ENCODE measurements at regions of chr3 and their contacts with region 1.

Region 1: GRCh38 chr3:101685870-101686412 is 577 bp downstream of the RPL24 start:
- DNase-seq: no peak
- ATAC-seq: peak; percentile 20
- H3K4me3 Mint-ChIP-seq: peak overlapping the region; percentile 100
- H3K27ac Mint-ChIP-seq: peak overlapping the region; percentile 95
- H3K4me1 Mint-ChIP-seq: peaks cover 36% of the 10 kb centered on the region
- H3K27me3 Mint-ChIP-seq: no peaks in the 10 kb centered on the region

Region 2: GRCh38 chr3:101588616-101589015 is 97.3 kb before region 1 on chr3:
- CTCF ChIA-PET with region 1: no interaction called
- DNase-seq: no peak
- ATAC-seq: no peak
- H3K4me3 Mint-ChIP-seq: no peak overlapping the region
- H3K27ac Mint-ChIP-seq: no peak overlapping the region
- H3K4me1 Mint-ChIP-seq: peaks cover 11% of the 10 kb centered on the region
- H3K27me3 Mint-ChIP-seq: no peaks in the 10 kb centered on the region

Region 3: GRCh38 chr3:101724329-101725193 is 38.6 kb after region 1 on chr3 and contains the start of gene CEP97:
- CTCF ChIA-PET with region 1: interaction called, 13 read pairs
- DNase-seq: peak; percentile 94
- ATAC-seq: peak; percentile 95
- H3K4me3 Mint-ChIP-seq: peak within 1 kb of the TSS; percentile 92
- H3K27ac Mint-ChIP-seq: peak within 1 kb of the TSS; percentile 95
- H3K4me1 Mint-ChIP-seq: peaks cover 43% of the 10 kb centered on the region
- H3K27me3 Mint-ChIP-seq: no peaks in the 10 kb centered on the region
- total RNA-seq, gene CEP97: 22.5 TPM